ENCODE measurements at regions of chr6 and their contacts with region 1.

Region 1: GRCh38 chr6:43402820-43403219 is 24.5 kb upstream of the ABCC10 start:
- DNase-seq: no peak
- H3K4me3 ChIP-seq: no peak overlapping the region
- H3K4me3 Mint-ChIP-seq: no peak overlapping the region
- H3K27ac ChIP-seq: no peak overlapping the region
- H3K27ac Mint-ChIP-seq: no peak overlapping the region
- H3K4me1 ChIP-seq: peaks cover 4% of the 10 kb centered on the region
- H3K4me1 Mint-ChIP-seq: peaks cover under 1 to 3% (median 2%) of the 10 kb centered on the region in 4 donors
- H3K27me3 ChIP-seq: no peaks in the 10 kb centered on the region
- H3K27me3 Mint-ChIP-seq: peaks cover 6 to 11% of the 10 kb centered on the region in 2 donors

Region 2: DNA sequence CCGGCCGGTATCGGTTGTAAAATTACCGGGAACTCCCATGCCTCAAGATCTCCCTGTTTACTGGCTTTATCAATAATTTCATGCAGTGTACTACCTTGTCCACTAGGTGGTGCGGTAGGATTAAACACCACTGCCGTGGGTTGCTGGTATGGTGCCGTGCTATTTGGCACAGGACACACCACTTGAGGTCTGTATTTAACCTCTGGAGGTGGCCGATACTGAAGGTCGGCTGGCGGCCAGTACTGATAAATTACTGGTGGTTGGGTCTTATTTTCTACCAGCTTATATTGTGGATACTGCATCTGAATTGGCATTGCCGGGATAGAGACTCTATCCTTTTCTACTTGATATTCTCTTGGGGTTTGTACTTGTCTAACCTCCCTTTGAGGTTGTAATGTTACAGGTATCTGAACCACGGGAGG is 501.3 kb before region 1 on chr6:
- CTCF ChIA-PET with region 1: interaction called, 4 read pairs
- POLR2A ChIA-PET with region 1: no interaction called
- intact Hi-C with region 1: loop called (anchors 1 kb)
- DNase-seq: peak; percentile 71 to 80 (median 77)
- H3K4me3 ChIP-seq: no peak overlapping the region
- H3K4me3 Mint-ChIP-seq: no peak overlapping the region
- H3K27ac ChIP-seq: no peak overlapping the region
- H3K27ac Mint-ChIP-seq: peak overlapping the region in 1 of 7 donors; percentile 4
- H3K4me1 ChIP-seq: peaks cover 8% of the 10 kb centered on the region
- H3K4me1 Mint-ChIP-seq: peaks cover 4 to 11% (median 6%) of the 10 kb centered on the region in 4 donors
- H3K27me3 ChIP-seq: no peaks in the 10 kb centered on the region
- H3K27me3 Mint-ChIP-seq: no peaks in the 10 kb centered on the region

Region 3: GRCh38 chr6:43263314-43264178 is 139.3 kb before region 1 on chr6:
- CTCF ChIA-PET with region 1: interaction called, 70 read pairs
- POLR2A ChIA-PET with region 1: interaction called, 3 read pairs
- intact Hi-C with region 1: loop called (anchors 1 kb)
- DNase-seq: peak; percentile 65 to 71 (median 66)
- H3K4me3 ChIP-seq: no peak overlapping the region
- H3K4me3 Mint-ChIP-seq: peak overlapping the region in 1 of 8 donors; percentile 9
- H3K27ac ChIP-seq: no peak overlapping the region
- H3K27ac Mint-ChIP-seq: no peak overlapping the region
- H3K4me1 ChIP-seq: peaks cover 6% of the 10 kb centered on the region
- H3K4me1 Mint-ChIP-seq: peaks cover 0 to 4% (median 2%) of the 10 kb centered on the region in 4 donors
- H3K27me3 ChIP-seq: no peaks in the 10 kb centered on the region
- H3K27me3 Mint-ChIP-seq: peaks cover 0 to 1% of the 10 kb centered on the region in 2 donors

Region 4: GRCh38 chr6:43334466-43335095 is 68.2 kb before region 1 on chr6:
- CTCF ChIA-PET with region 1: interaction called, 12 read pairs
- POLR2A ChIA-PET with region 1: no interaction called
- intact Hi-C with region 1: no loop called
- DNase-seq: peak in 1 of 5 donors; percentile 12
- H3K4me3 ChIP-seq: no peak overlapping the region
- H3K4me3 Mint-ChIP-seq: no peak overlapping the region
- H3K27ac ChIP-seq: no peak overlapping the region
- H3K27ac Mint-ChIP-seq: peak overlapping the region in 6 of 7 donors; percentile 36 to 88 (median 50)
- H3K4me1 ChIP-seq: peaks cover 17% of the 10 kb centered on the region
- H3K4me1 Mint-ChIP-seq: peaks cover 15 to 30% (median 17%) of the 10 kb centered on the region in 4 donors
- H3K27me3 ChIP-seq: no peaks in the 10 kb centered on the region
- H3K27me3 Mint-ChIP-seq: no peaks in the 10 kb centered on the region

Region 5: DNA sequence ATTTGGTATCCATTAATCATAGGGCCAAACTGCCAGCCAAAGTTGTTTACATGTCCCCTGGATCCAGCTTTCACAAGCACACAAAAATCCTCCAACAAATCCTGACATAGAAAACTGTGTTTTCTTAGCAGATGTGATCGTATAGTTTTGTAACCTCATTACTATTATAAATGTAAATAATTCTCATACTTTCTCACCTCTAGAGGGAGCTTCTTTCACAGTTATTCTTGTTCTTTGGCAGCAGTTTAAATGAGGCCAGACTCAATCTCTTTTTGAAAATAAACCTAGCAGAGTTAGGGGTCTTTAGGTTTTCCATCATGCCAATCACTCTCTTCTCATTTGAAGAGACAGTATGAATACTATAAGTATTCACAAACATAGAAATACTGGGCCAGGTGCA is 16.3 kb before region 1 on chr6:
- CTCF ChIA-PET with region 1: interaction called, 19 read pairs
- POLR2A ChIA-PET with region 1: interaction called, 13 read pairs
- intact Hi-C with region 1: loop called (anchors 1 kb)
- DNase-seq: peak in 3 of 5 donors; percentile 29 to 60 (median 36)
- H3K4me3 ChIP-seq: no peak overlapping the region
- H3K4me3 Mint-ChIP-seq: peak overlapping the region in 2 of 8 donors; percentile 28 to 64
- H3K27ac ChIP-seq: no peak overlapping the region
- H3K27ac Mint-ChIP-seq: peak overlapping the region in 6 of 7 donors; percentile 43 to 92 (median 84)
- H3K4me1 ChIP-seq: peaks cover 67% of the 10 kb centered on the region
- H3K4me1 Mint-ChIP-seq: peaks cover 54 to 74% (median 63%) of the 10 kb centered on the region in 4 donors
- H3K27me3 ChIP-seq: no peaks in the 10 kb centered on the region
- H3K27me3 Mint-ChIP-seq: peaks cover 0 to 8% of the 10 kb centered on the region in 2 donors

Region 6: DNA sequence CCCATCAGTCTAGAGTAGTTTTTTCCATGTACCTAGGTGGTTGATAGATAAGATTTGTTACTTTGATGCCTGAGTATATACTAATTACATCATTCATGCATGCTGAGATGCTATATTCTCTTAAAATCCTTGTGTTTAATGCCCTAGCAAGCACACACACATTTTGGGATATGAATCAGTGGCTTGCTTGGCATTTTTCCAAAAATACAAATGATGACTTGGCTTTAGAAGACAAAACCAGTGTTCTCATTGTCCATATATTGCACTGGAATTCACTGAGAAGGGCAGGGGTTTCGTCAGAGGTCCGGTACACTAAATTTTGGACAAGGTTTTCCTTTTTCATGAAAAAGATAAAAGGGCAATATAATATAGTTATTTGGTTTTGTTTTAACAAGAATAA is 201.4 kb after region 1 on chr6:
- CTCF ChIA-PET with region 1: no interaction called
- POLR2A ChIA-PET with region 1: no interaction called
- intact Hi-C with region 1: no loop called
- DNase-seq: no peak
- H3K4me3 ChIP-seq: no peak overlapping the region
- H3K4me3 Mint-ChIP-seq: no peak overlapping the region
- H3K27ac ChIP-seq: no peak overlapping the region
- H3K27ac Mint-ChIP-seq: peak overlapping the region in 2 of 7 donors; percentile 4 to 29
- H3K4me1 ChIP-seq: no peaks in the 10 kb centered on the region
- H3K4me1 Mint-ChIP-seq: peaks cover 3 to 7% (median 6%) of the 10 kb centered on the region in 4 donors
- H3K27me3 ChIP-seq: no peaks in the 10 kb centered on the region
- H3K27me3 Mint-ChIP-seq: no peaks in the 10 kb centered on the region